ENCODE measurements at regions of chr10 and their contacts with region 1.

Region 1: DNA sequence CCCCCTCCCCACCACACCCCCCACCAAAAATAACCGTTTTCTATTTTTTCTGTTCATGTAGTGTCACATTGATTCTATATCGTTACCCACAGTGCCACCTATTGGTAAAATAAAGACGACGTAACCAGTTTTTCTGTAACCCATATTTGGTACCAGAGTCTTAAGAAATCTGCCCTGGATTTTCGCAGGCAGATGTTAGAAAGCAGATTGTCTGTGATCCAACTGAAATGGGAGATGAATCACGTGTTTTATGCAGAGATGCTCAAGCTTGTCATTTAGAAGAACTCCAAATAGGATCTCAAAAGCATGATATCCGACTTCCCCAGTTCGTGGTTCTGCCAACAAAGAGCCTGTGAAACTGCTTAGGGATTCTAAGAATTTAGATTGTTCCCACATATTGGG is 261.1 kb upstream of the CSTF2T start:
- DNase-seq: peak; percentile 18
- H3K4me3 ChIP-seq: no peak overlapping the region
- H3K27ac ChIP-seq: no peak overlapping the region
- H3K4me1 ChIP-seq: no peaks in the 10 kb centered on the region
- H3K27me3 ChIP-seq: no peaks in the 10 kb centered on the region
- CTCF ChIP-seq: peak; percentile 45 to 56

Region 2: GRCh38 chr10:51063659-51064535 is 896.6 kb before region 1 on chr10:
- CTCF ChIA-PET with region 1: no interaction called
- dilution Hi-C with region 1: no loop called
- in situ Hi-C with region 1: loop called in 1 of 2 experiments (anchors 25 kb)
- intact Hi-C with region 1: loop called (anchors 2 kb)
- DNase-seq: peak; percentile 15
- H3K4me3 ChIP-seq: no peak overlapping the region
- H3K27ac ChIP-seq: no peak overlapping the region
- H3K4me1 ChIP-seq: no peaks in the 10 kb centered on the region
- H3K27me3 ChIP-seq: no peaks in the 10 kb centered on the region
- CTCF ChIP-seq: peak; percentile 56 to 61

Region 3: GRCh38 chr10:51074238-51075028 is 886.1 kb before region 1 on chr10 and contains the start of gene PRKG1:
- CTCF ChIA-PET with region 1: no interaction called
- dilution Hi-C with region 1: no loop called
- in situ Hi-C with region 1: loop called in 1 of 2 experiments (anchors 25 kb)
- intact Hi-C with region 1: no loop called
- DNase-seq: peak; percentile 52
- H3K4me3 ChIP-seq: peak within 1 kb of the TSS; percentile 47 to 58 (median 52)
- H3K27ac ChIP-seq: no peak within 1 kb of the TSS
- H3K4me1 ChIP-seq: peaks cover 11% of the 10 kb centered on the region
- H3K27me3 ChIP-seq: peaks cover 22% of the 10 kb centered on the region
- CTCF ChIP-seq: no peak
- total RNA-seq, gene PRKG1: 0.45 to 2.2 TPM

Region 4: GRCh38 chr10:51422311-51423120 is 538.0 kb before region 1 on chr10:
- CTCF ChIA-PET with region 1: no interaction called
- dilution Hi-C with region 1: no loop called
- in situ Hi-C with region 1: loop called in 1 of 2 experiments (anchors 25 kb)
- intact Hi-C with region 1: loop called (anchors 2 kb)
- DNase-seq: peak; percentile 14
- H3K4me3 ChIP-seq: no peak overlapping the region
- H3K27ac ChIP-seq: no peak overlapping the region
- H3K4me1 ChIP-seq: no peaks in the 10 kb centered on the region
- H3K27me3 ChIP-seq: no peaks in the 10 kb centered on the region
- CTCF ChIP-seq: peak; percentile 80 to 81

Region 5: DNA sequence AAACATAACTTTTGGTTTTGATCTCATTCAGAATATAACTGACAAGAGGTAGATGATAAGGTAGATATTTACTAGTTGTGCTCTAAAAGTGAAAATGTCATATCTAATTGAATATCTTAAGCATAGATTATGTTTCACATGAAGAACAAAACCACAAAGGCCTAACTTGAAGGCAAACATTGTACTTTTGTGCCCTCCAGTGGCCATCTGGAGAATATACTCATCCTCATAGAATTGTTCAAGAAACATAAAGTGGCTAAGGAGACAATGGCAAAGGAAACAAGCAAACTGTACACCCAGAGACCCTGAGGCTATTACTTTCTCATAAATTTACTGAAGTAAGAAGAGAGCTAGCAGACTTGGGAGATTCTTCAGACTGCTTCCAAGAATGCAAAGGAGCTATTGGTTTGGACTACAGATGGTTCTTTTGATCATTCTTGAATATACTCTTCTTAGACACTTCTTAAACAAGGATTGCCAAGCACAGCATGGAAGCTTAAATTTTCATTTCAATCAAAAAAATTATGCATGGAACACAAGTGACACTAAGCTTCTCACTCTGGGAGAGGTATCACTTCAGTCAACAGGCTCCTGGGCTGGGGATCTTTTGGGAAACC is 255.4 kb after region 1 on chr10:
- CTCF ChIA-PET with region 1: no interaction called
- dilution Hi-C with region 1: no loop called
- in situ Hi-C with region 1: no loop called
- intact Hi-C with region 1: loop called (anchors 10 kb)
- DNase-seq: peak; percentile 57
- H3K4me3 ChIP-seq: no peak overlapping the region
- H3K27ac ChIP-seq: no peak overlapping the region
- H3K4me1 ChIP-seq: no peaks in the 10 kb centered on the region
- H3K27me3 ChIP-seq: no peaks in the 10 kb centered on the region
- CTCF ChIP-seq: peak; percentile 66 to 68

Measured in mammary epithelial cell (primary cell).